Heart left ventricle (tissue), 16 donors: ENCODE measurements at regions of chr17 and their contacts with region 1.

Region 1: DNA sequence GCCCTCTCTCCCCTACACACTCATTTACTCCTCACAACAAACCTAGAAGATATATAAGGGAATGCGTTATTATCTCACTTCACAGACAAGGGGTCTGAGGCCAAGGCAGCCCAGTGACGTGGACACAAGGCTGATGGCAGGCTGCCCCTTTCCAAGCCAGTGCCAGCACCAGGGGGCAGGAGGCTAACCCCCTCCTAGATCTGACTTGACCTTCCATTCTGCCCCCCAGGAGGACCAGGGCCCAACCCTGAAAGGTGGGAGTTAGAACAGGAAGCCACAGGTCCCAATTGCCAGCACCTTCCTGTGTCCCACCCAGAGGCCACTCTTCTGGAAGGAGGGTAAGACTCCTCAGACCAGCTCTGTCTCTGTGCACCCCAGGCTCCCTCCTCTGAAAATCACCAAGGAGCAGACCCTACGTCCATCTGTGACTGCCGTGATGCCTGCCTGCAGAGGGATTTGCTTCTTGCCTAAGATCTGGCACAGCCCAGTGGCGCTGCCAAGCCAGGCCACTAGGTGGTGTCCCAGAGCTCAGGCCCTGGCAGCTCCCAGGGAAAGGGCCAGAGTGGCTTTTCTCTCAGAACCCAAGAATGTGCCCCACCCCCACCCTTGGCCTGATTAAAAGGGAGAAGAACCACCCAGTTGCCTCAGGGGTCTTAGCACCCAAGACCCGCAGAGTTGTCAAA is 42.4 kb upstream of the MRPS23 start:
- DNase-seq: peak; percentile 87 to 93 (median 91)
- ATAC-seq: peak; percentile 46 to 65 (median 47)
- H3K4me3 ChIP-seq: peak overlapping the region in 6 of 12 donors; percentile 48 to 56 (median 51)
- H3K27ac ChIP-seq: peak overlapping the region; percentile 92 to 100 (median 97)
- H3K4me1 ChIP-seq: peaks cover 6 to 90% (median 77%) of the 10 kb centered on the region in 12 donors
- H3K27me3 ChIP-seq: no peaks in the 10 kb centered on the region
- CTCF ChIP-seq: peak; percentile 95 to 100 (median 98)
- POLR2A ChIP-seq: no peak

Region 2: GRCh38 chr17:57401556-57402488 is 490.5 kb before region 1 on chr17:
- intact Hi-C with region 1: no loop called
- DNase-seq: no peak
- ATAC-seq: peak in 2 of 4 donors; percentile 18 to 28
- H3K4me3 ChIP-seq: no peak overlapping the region
- H3K27ac ChIP-seq: peak overlapping the region in 1 of 12 donors; percentile 69
- H3K4me1 ChIP-seq: peaks cover 0 to 65% (median 22%) of the 10 kb centered on the region in 12 donors
- H3K27me3 ChIP-seq: no peaks in the 10 kb centered on the region
- CTCF ChIP-seq: peak in 1 of 12 donors; percentile 10
- POLR2A ChIP-seq: no peak

Region 3: GRCh38 chr17:57480438-57481196 is 411.7 kb before region 1 on chr17:
- intact Hi-C with region 1: no loop called
- DNase-seq: peak in 3 of 5 donors; percentile 43 to 54 (median 50)
- ATAC-seq: peak in 3 of 4 donors; percentile 43 to 51 (median 51)
- H3K4me3 ChIP-seq: no peak overlapping the region
- H3K27ac ChIP-seq: peak overlapping the region in 9 of 12 donors; percentile 28 to 76 (median 68)
- H3K4me1 ChIP-seq: peaks cover 0 to 75% (median 44%) of the 10 kb centered on the region in 12 donors
- H3K27me3 ChIP-seq: no peaks in the 10 kb centered on the region
- CTCF ChIP-seq: no peak
- POLR2A ChIP-seq: no peak

Region 4: DNA sequence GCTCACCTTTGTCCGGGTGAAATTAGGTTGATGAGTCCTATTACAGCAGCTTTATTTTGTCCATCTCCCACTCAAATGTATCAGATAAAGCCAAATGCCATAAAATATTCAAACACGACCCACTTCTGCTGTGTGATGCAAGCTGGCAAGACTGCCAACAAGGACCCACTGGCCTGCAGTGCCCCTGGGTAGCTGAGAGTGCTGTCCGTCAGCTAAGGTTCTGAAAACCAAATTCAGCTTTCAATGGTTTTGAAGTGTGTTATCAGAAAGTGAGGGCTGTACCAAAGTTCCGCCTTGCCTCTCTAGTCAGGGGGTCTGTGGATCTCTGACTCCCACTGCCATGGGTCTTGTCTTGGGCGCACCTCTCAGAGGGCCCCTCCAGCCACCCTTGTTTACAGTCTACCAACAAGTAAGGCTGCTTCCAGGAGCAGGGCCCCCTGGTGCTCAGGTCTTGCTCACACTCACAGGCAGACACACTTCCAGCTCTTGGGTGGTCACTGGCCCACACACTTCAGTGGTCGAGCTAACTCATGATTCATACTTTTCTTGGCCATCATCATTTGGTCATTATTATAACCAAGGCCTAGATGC is 136.7 kb before region 1 on chr17:
- intact Hi-C with region 1: no loop called
- DNase-seq: no peak
- ATAC-seq: no peak
- H3K4me3 ChIP-seq: no peak overlapping the region
- H3K27ac ChIP-seq: no peak overlapping the region
- H3K4me1 ChIP-seq: peaks cover 0 to 3% (median 0%) of the 10 kb centered on the region in 12 donors
- H3K27me3 ChIP-seq: no peaks in the 10 kb centered on the region
- CTCF ChIP-seq: no peak
- POLR2A ChIP-seq: no peak

Region 5: DNA sequence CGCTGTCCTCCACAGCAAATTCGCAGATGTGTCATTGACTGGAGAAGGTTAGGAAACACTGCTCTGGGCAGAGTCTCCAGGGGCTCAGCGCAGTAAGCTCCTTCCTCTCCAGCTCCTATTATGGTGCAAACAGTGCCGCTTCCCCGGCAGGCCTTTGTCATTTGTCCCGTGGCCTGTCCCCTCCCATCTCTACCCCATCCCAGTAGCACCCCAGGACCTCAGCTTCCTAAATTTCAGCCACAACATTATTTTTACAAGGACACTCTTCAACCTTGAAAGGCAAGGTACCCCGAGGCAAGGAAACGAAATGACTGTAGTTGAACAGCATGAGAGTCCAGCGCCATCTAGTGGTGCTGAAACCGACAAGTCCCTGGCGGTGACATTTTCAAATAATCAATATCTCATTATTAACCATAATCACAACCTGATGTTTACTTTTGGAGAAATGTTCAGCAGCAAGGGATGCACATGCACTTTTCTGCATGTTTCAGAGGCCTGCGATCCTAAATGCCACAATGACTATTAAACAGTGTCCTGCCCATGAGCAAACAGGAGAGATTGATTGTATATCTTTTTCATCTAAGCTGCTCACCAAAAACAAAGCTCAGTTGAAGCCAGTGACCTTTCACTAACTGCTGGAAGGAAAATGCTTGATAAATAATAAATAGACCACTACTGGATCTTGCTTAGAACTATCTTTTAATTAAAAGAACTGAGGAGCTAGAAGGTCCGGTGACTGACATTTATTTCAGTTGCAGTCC is 58.9 kb before region 1 on chr17:
- intact Hi-C with region 1: no loop called
- DNase-seq: peak; percentile 64 to 80 (median 76)
- ATAC-seq: peak; percentile 63 to 87 (median 81)
- H3K4me3 ChIP-seq: peak overlapping the region in 10 of 12 donors; percentile 24 to 58 (median 48)
- H3K27ac ChIP-seq: peak overlapping the region; percentile 58 to 95 (median 82)
- H3K4me1 ChIP-seq: peaks cover 0 to 46% (median 15%) of the 10 kb centered on the region in 12 donors
- H3K27me3 ChIP-seq: no peaks in the 10 kb centered on the region
- CTCF ChIP-seq: peak; percentile 85 to 97 (median 91)
- POLR2A ChIP-seq: no peak

Region 6: DNA sequence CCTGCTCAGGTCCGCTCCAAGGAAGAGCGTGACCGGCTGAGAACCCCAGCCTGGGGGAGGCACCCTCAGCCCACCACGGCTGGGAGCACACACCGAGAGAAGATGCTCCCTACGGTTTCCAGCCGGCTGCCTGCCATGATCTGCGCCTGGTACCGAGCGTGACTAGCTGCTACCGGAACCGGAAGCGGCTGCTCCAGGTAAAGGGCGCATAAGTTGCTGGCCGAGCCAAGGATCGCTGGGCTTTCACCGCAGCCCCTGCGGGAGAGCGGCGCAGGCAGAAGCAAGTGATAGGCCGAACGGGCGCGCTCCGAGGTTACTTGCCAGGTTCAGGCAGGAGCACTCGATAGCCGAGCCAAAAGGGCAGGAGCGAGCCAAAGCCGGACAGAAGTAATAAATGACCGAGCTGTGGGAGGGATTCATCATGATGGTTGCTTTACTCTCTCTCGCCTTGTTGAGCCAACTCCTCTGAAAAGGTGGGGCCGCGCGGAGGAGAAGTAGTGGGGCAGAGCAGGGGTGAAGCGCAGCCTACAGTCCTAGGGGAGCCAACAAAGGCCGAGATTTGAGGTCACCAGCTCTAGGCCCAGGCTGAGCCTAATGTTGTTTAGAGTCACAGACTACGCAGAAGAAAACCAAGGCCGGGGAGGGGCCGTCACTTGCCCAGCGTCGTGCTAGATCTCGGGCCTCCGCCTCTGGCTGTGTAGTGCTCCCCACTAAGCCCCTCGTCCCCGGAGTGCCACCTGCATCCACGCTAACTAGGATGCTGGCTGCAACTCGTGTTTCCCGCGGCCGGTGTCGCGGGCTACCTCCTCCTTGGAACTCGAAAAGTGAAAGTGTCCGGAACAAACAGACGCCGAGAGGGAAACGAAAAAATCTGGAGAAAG is 42.2 kb before region 1 on chr17 and contains the start of gene MRPS23:
- intact Hi-C with region 1: loop called in 4 of 10 experiments (anchors 5 kb)
- DNase-seq: peak; percentile 98 to 99 (median 99)
- ATAC-seq: peak; percentile 74 to 91 (median 88)
- H3K4me3 ChIP-seq: peak within 1 kb of the TSS; percentile 57 to 98 (median 82)
- H3K27ac ChIP-seq: peak within 1 kb of the TSS; percentile 88 to 97 (median 94)
- H3K4me1 ChIP-seq: peaks cover 4 to 68% (median 35%) of the 10 kb centered on the region in 12 donors
- H3K27me3 ChIP-seq: no peaks in the 10 kb centered on the region
- CTCF ChIP-seq: no peak
- POLR2A ChIP-seq: peak; percentile 40 to 83
- total RNA-seq, gene MRPS23: 44.6 to 99.3 (median 71.8) TPM

Region 7: DNA sequence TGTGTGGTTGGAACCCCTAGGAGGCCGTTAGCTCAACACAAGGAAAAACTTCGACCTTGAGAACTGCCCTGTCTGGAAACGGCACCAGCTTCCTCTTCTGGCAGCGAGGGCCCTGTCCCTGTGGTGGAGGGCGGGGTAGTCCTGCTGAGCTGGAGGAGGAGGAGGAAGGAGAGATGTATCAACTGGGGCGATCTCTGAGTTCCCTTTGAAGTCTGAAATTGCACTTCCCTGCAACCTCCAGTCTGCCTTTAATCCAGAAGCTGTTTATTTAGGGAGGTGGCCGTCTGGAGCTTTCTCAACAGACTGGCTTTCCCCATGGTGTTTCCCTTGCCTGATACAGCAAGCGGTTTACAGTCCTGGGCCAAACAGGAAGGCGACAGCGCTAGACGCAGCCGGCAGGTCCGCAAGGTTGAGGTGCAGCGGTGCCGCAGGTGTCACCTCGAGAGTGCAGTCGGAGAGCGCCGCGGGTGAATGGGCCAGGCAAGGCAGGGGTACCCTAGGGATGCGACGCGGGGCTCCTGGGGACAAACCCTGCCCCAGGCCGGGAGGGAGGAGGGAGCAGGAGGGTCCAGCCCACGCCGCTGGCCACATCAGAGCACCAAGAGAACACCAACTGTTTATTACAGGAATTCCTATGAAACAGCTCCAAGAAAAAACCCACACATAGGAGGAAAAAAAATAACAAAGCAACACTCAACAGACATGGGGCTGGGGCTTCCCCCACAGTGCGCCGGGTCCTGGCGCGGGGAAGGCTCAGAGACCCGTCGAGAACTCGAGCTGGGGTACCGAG is 31.1 kb before region 1 on chr17:
- intact Hi-C with region 1: loop called in 4 of 10 experiments (anchors 1 to 5 kb)
- DNase-seq: peak; percentile 65 to 79 (median 78)
- ATAC-seq: peak; percentile 10 to 64 (median 54)
- H3K4me3 ChIP-seq: peak overlapping the region; percentile 33 to 69 (median 56)
- H3K27ac ChIP-seq: peak overlapping the region; percentile 55 to 95 (median 82)
- H3K4me1 ChIP-seq: peaks cover 3 to 46% (median 36%) of the 10 kb centered on the region in 12 donors
- H3K27me3 ChIP-seq: no peaks in the 10 kb centered on the region
- CTCF ChIP-seq: no peak
- POLR2A ChIP-seq: no peak

Region 8: GRCh38 chr17:57916925-57917858 is 24.9 kb after region 1 on chr17:
- intact Hi-C with region 1: loop called in 1 of 10 experiments (anchors 2 kb)
- DNase-seq: peak in 3 of 5 donors; percentile 50 to 81 (median 55)
- ATAC-seq: peak; percentile 66 to 83 (median 76)
- H3K4me3 ChIP-seq: no peak overlapping the region
- H3K27ac ChIP-seq: peak overlapping the region in 11 of 12 donors; percentile 44 to 84 (median 78)
- H3K4me1 ChIP-seq: peaks cover 25 to 99% (median 81%) of the 10 kb centered on the region in 12 donors
- H3K27me3 ChIP-seq: no peaks in the 10 kb centered on the region
- CTCF ChIP-seq: peak in 4 of 12 donors; percentile 7 to 26 (median 14)
- POLR2A ChIP-seq: no peak

Region 9: GRCh38 chr17:57946798-57947358 is 54.6 kb after region 1 on chr17:
- intact Hi-C with region 1: loop called in 7 of 10 experiments (anchors 5 kb)
- DNase-seq: peak in 4 of 5 donors; percentile 42 to 61 (median 50)
- ATAC-seq: peak; percentile 69 to 80 (median 77)
- H3K4me3 ChIP-seq: peak overlapping the region in 11 of 12 donors; percentile 4 to 62 (median 47)
- H3K27ac ChIP-seq: peak overlapping the region; percentile 54 to 100 (median 90)
- H3K4me1 ChIP-seq: peaks cover 19 to 97% (median 86%) of the 10 kb centered on the region in 12 donors
- H3K27me3 ChIP-seq: no peaks in the 10 kb centered on the region
- CTCF ChIP-seq: no peak
- POLR2A ChIP-seq: no peak

Region 10: DNA sequence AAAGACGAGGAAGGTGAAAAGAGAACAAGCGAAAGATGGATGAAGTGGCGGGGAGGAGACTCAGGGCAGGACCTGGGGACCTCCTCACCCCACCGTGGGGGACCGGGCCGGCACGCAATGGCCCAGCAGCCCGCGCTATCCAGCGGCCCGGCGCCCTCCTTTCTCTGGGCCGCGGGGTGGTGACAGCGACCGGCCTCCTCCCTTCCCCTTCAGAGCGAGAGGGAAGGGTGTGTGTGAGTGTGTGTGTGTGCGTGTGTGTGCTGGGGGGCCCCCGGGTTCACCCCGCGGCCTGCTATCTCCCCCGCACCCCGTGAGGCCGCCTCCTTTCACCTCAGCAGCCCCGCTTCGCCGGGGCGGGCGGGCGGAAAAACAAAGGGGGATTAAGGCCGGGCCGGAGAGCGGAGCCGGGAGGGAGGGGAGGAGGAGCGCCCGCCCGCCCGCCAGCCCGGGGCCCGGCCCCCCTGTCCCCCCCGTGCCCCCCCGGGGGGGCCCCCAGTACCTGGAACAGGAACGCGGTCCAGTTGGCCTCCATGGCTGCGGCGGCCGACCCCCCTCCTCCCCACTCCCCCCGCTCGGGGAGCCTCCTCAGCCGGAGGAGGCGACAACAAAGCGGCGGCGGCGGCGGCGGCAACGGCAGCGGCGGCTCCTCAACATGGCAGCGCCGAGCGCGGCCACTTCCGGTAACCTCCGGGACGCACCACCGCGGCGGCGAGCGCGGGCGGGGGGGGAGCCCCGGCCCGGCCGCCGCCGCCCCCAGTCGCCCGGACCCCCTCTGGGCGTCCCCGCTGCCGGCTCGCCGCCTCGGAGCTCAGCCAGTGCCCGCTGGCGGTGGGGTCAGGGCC is 95.5 kb after region 1 on chr17 and contains the start of gene VEZF1:
- intact Hi-C with region 1: loop called in 9 of 10 experiments (anchors 2 to 5 kb)
- DNase-seq: peak; percentile 84 to 92 (median 89)
- ATAC-seq: peak; percentile 29 to 76 (median 73)
- H3K4me3 ChIP-seq: peak within 1 kb of the TSS; percentile 60 to 92 (median 86)
- H3K27ac ChIP-seq: peak within 1 kb of the TSS; percentile 91 to 99 (median 97)
- H3K4me1 ChIP-seq: peaks cover 0 to 78% (median 50%) of the 10 kb centered on the region in 12 donors
- H3K27me3 ChIP-seq: no peaks in the 10 kb centered on the region
- CTCF ChIP-seq: no peak
- POLR2A ChIP-seq: peak in 1 of 2 donors; percentile 27
- total RNA-seq, gene VEZF1: 58.9 to 85.6 (median 62.6) TPM

Region 11: GRCh38 chr17:58219001-58219788 is 326.9 kb after region 1 on chr17 and contains the start of gene MKS1:
- intact Hi-C with region 1: loop called in 1 of 10 experiments (anchors 2 kb)
- DNase-seq: peak; percentile 93 to 98 (median 95)
- ATAC-seq: peak; percentile 98 to 100 (median 100)
- H3K4me3 ChIP-seq: peak within 1 kb of the TSS; percentile 54 to 93 (median 78)
- H3K27ac ChIP-seq: peak within 1 kb of the TSS in 11 of 12 donors; percentile 61 to 84 (median 76)
- H3K4me1 ChIP-seq: peaks cover 0 to 14% (median 6%) of the 10 kb centered on the region in 12 donors
- H3K27me3 ChIP-seq: peaks cover 0 to 11% (median 0%) of the 10 kb centered on the region in 9 donors
- CTCF ChIP-seq: peak; percentile 36 to 88 (median 70)
- POLR2A ChIP-seq: peak in 1 of 2 donors; percentile 79
- total RNA-seq, gene MKS1: 3.3 to 15.1 (median 8.6) TPM